A549 (cell line): ENCODE measurements at regions of chr2 and their contacts with region 1.

Region 1: GRCh38 chr2:107936433-107937359 is 49.6 kb upstream of the SLC5A7 start:
- DNase-seq: peak in 1 of 2 experiments; percentile 11
- ATAC-seq: no peak
- H3K4me3 ChIP-seq: no peak overlapping the region
- H3K27ac ChIP-seq: no peak overlapping the region
- H3K4me1 ChIP-seq: no peaks in the 10 kb centered on the region
- CTCF ChIP-seq: peak; percentile 81
- EP300 ChIP-seq: no peak
- POLR2A ChIP-seq: no peak
- RAD21 ChIP-seq: peak; percentile 75 to 80

Region 2: DNA sequence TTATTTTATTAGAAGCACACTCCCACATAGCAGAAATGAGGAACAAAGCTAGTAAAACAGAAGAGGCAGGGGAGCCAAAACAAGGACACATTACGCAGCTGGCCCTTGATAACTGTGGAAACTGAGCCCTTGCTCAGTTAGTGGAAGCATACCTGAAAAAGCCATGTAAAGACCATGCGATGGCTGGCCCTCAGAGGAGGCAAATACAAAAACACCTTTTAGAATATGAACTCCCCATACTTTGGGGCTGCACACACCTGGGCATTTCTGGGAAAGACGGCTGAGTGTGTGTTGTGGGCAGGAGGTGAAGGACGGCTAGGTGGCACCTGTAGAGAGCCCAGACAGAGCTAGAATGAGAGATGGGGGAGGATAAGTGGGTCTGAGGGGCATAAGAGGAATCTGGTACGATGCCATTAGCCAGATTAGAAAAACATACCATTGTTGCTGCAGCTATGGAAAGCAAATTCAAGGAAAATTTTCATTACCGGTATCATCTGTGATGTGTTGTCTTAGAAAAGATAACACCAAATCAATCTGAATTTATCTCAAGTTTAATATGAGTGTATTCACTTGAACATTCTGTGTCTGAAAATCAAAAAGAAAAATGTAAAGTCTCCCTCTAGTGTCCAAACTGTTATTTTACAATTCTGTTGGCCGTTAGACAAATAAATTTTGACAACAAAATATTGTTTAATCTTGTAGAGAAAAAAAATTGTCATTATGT is 257.9 kb after region 1 on chr2:
- CTCF ChIA-PET with region 1: interaction called, 10 read pairs
- POLR2A ChIA-PET with region 1: no interaction called
- DNase-seq: peak in 1 of 2 experiments; percentile 29
- ATAC-seq: peak; percentile 56 to 70
- H3K4me3 ChIP-seq: no peak overlapping the region
- H3K27ac ChIP-seq: peak overlapping the region; percentile 72 to 74
- H3K4me1 ChIP-seq: peaks cover 24% of the 10 kb centered on the region
- CTCF ChIP-seq: peak; percentile 66
- EP300 ChIP-seq: no peak
- POLR2A ChIP-seq: no peak
- RAD21 ChIP-seq: peak; percentile 48 to 66; a peak in 4 of 5 replicates